ENCODE measurements at regions of chr10 and their contacts with region 1.

Region 1: DNA sequence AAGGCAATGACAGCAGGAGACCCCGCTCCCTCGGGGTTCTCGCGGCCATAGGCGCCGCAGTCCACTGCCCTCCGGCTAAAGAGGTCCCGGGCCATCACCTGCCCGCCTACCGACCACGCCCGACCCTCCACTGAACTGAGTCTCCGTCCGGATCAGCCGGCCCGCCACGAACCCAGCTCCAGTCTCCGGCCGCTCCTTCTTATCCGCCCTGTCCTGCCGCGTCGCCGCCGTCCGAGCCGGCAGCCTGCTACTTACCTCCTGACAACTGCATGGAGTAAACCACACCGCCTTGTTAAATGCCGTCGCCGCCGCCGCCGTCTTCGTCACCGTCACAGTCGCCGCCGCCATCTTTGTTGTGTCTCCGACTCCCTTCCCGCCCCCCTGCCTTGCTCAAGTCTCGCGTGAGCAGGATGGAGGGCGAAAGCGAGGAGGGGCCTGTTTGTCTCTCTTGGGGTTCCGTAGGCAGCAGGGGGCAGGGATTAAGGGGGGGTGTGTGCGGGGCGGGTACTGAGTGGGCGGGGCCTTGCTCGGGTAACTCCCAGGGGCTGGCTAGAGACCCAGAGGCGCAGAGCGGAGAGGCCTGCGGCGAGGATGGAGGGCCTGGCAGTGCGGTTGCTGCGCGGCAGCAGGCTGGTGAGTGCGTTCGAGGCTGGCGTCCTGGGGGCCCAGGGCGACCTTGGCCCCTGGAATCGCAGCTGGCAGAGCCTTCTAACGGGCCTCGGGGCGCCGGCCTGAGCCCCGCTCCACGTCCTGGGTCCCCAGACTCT is at the starts of genes ACADSB and IKZF5:
- DNase-seq: peak; percentile 99
- H3K4me3 ChIP-seq: peak within 1 kb of the TSS; percentile 81 to 99 (median 93)
- H3K27ac ChIP-seq: peak within 1 kb of the TSS; percentile 91 to 95 (median 94)
- H3K4me1 ChIP-seq: peaks cover 0 to 50% (median 20%) of the 10 kb centered on the region in 4 donors
- H3K27me3 ChIP-seq: no peaks in the 10 kb centered on the region
- CTCF ChIP-seq: no peak
- EP300 ChIP-seq: no peak
- POLR2A ChIP-seq: peak; percentile 74
- total RNA-seq, gene ACADSB: 15.0 to 18.7 (median 16.8) TPM
- total RNA-seq, gene IKZF5: 9.4 to 16.4 (median 13.4) TPM

Region 2: DNA sequence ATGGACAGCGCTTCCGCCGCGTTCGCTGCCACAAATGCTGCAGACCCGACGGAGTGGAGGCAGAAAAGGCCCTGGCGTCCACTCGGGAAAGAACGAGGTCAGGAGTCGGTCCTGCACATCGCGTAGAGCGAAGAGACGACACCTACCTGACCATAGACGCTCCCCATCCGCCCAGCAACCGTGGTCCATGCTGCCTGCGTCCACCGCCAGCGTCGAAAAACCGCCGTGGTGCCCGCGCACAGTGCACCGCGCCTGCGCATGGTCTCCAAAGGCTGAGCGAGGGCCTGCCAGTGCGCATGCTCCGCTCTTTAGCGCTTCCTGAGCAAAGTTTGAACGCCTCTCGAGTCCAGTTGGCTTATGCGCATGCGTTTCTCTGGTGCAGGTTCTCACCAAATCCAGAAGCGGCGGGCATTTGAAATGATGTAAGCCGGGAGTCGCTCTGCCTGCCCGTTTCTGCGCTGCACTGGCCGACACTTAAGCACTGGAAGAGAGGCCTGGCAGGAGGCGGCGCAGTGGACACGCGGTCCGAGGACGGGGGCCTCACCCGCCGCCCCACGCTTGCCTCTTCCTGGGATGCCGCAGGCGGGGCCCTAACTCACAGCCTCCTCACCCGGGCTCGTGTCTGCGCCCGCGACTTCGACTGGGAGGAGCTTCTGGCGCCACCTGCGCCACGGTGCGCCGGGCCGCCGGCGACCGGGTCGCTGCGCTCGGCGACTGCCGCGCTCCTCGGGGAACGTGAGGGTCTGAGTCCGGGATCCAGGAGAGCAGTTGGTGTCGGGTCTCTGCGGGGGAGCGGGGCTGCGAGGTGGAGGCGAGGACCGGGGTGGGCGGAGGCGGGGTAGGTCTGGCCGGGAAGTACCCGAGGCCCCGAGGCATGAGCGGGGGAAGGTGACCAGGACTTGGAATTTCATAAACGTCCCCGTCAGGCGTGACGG is 129.0 kb before region 1 on chr10 and contains the start of gene FAM24B:
- intact Hi-C with region 1: loop called (anchors 1 kb)
- DNase-seq: peak; percentile 98
- H3K4me3 ChIP-seq: peak within 1 kb of the TSS; percentile 36 to 63 (median 56)
- H3K27ac ChIP-seq: peak within 1 kb of the TSS; percentile 30 to 65 (median 56)
- H3K4me1 ChIP-seq: peaks cover 0 to 18% (median 13%) of the 10 kb centered on the region in 4 donors
- H3K27me3 ChIP-seq: no peaks in the 10 kb centered on the region
- CTCF ChIP-seq: no peak
- EP300 ChIP-seq: no peak
- POLR2A ChIP-seq: no peak
- total RNA-seq, gene FAM24B: 0.99 to 4.2 TPM in 2 of 4 donors, not detected in the others

Region 3: GRCh38 chr10:122953827-122954730 is 54.5 kb before region 1 on chr10 and contains the start of gene C10orf88:
- intact Hi-C with region 1: loop called (anchors 1 kb)
- DNase-seq: peak; percentile 99
- H3K4me3 ChIP-seq: peak within 1 kb of the TSS; percentile 68 to 86 (median 80)
- H3K27ac ChIP-seq: peak within 1 kb of the TSS; percentile 74 to 82 (median 76)
- H3K4me1 ChIP-seq: peaks cover 0 to 22% (median 19%) of the 10 kb centered on the region in 4 donors
- H3K27me3 ChIP-seq: no peaks in the 10 kb centered on the region
- CTCF ChIP-seq: no peak
- EP300 ChIP-seq: no peak
- POLR2A ChIP-seq: no peak
- total RNA-seq, gene C10orf88: 3.0 to 10.2 (median 4.8) TPM

Region 4: DNA sequence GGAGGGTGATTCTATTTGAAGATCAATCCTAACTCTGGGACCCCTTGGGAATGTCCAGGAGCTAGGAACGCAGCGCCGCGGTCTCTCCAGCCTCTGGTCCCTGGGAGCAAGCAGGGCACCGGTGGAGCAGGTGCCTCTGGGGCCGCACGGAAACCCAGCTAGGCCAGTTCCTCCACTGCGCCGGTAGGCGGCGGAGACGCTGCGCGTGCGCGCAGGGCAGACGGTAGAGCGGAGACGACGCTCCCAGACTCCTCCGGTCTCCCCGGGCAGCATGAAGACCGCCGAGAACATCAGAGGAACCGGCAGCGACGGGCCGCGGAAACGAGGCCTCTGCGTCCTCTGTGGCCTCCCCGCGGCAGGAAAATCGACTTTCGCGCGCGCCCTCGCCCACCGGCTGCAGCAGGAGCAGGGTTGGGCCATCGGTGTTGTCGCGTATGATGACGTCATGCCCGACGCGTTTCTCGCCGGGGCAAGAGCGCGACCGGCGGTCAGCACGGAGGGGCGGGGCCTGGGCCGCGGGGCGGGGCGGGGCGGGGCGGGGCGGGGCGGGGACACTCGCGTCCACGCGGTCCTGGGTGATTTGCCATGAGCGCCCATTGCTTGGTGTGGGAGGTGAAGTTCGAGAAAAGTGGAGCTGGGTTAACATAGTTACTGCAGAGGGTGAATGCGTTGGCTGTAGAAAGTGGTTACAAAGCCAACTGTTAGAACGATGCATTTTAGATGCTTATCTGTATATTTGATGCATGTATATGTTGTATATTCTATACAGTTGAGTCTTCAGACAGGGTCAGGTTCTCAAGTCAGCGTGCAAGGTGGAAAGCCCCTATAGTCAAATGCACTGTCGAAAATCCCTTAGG is 28.2 kb before region 1 on chr10 and contains the start of gene PSTK:
- intact Hi-C with region 1: loop called (anchors 1 kb)
- DNase-seq: peak; percentile 96
- H3K4me3 ChIP-seq: peak within 1 kb of the TSS; percentile 67 to 85 (median 76)
- H3K27ac ChIP-seq: peak within 1 kb of the TSS; percentile 89 to 96 (median 92)
- H3K4me1 ChIP-seq: peaks cover 0 to 14% (median 11%) of the 10 kb centered on the region in 4 donors
- H3K27me3 ChIP-seq: no peaks in the 10 kb centered on the region
- CTCF ChIP-seq: peak; percentile 95 to 98 (median 96)
- EP300 ChIP-seq: no peak
- POLR2A ChIP-seq: no peak
- total RNA-seq, gene PSTK: 1.6 to 3.6 (median 3.4) TPM

Region 5: GRCh38 chr10:123062726-123063125 is 54.1 kb after region 1 on chr10:
- intact Hi-C with region 1: no loop called
- DNase-seq: no peak
- H3K4me3 ChIP-seq: no peak overlapping the region
- H3K27ac ChIP-seq: no peak overlapping the region
- H3K4me1 ChIP-seq: no peaks in the 10 kb centered on the region
- H3K27me3 ChIP-seq: peaks cover 0 to 7% (median 0%) of the 10 kb centered on the region in 3 donors
- CTCF ChIP-seq: no peak
- EP300 ChIP-seq: no peak
- POLR2A ChIP-seq: no peak

Region 6: DNA sequence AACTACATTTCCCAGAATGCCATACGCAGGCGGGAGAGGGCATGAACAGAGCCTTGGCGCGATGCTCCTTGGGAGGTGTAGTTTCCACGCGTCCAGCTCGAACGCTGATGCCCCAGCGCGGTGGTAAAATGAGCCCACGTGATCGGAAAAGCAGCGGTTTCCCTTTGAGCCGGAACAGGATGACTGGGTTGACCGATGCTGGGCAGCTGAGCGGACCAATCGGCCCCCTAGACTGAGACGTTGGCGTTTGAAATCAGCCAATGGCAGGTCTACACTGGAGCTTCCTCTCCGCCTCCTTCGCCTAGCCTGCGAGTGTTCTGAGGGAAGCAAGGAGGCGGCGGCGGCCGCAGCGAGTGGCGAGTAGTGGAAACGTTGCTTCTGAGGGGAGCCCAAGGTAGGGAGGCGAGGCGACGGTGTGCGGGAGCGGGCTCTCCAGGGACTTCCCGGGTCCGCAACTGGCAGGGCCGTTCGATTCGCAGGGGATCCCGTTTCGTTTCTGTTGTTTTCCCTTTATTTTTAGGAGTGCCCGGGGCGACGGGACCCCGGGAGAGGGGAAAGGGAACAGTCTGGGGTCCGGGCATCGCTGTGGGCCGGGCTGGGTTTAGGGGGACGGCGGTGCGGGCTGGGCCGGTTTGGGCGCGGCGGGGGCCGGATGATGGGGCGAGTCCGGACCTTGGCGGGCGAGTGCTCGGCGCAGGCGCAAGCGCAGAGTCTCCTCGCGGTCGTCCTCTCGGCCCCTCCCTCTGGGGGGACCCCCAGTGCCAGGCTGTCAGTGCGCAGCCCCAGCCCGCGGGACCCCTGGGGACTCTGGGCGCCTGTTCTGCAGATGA is 145.7 kb after region 1 on chr10 and contains the start of gene BUB3:
- intact Hi-C with region 1: loop called (anchors 2 kb)
- DNase-seq: peak; percentile 99
- H3K4me3 ChIP-seq: peak within 1 kb of the TSS; percentile 90 to 99 (median 99)
- H3K27ac ChIP-seq: peak within 1 kb of the TSS; percentile 93 to 96 (median 94)
- H3K4me1 ChIP-seq: peaks cover 0 to 45% (median 36%) of the 10 kb centered on the region in 4 donors
- H3K27me3 ChIP-seq: peaks cover 23 to 43% (median 38%) of the 10 kb centered on the region in 3 donors
- CTCF ChIP-seq: peak in 2 of 4 experiments; percentile 19 to 20
- EP300 ChIP-seq: no peak
- POLR2A ChIP-seq: peak; percentile 68 to 82
- total RNA-seq, gene BUB3: 75.6 to 116 (median 101) TPM